Dorsolateral prefrontal cortex (tissue), 120 donors: ENCODE measurements at regions of chr17 and their contacts with region 1.

Region 1: GRCh38 chr17:1920948-1921351 is 91.1 kb downstream of the RPA1 start:
- DNase-seq: peak; percentile 44 to 97 (median 76)
- H3K4me3 ChIP-seq: no peak overlapping the region
- H3K27ac ChIP-seq: peak overlapping the region in 43 of 59 donors; percentile 17 to 89 (median 68)
- H3K27me3 ChIP-seq: peaks cover 0 to 10% (median 0%) of the 10 kb centered on the region in 45 donors
- CTCF ChIP-seq: no peak

Region 2: GRCh38 chr17:1992541-1992940 is 71.6 kb after region 1 on chr17:
- intact Hi-C with region 1: loop called in 1 of 2 experiments (anchors 5 kb)
- DNase-seq: peak in 7 of 10 donors; percentile 48 to 79 (median 69)
- H3K4me3 ChIP-seq: no peak overlapping the region
- H3K27ac ChIP-seq: peak overlapping the region in 50 of 59 donors; percentile 16 to 85 (median 64)
- H3K27me3 ChIP-seq: peaks cover 0 to 5% (median 0%) of the 10 kb centered on the region in 45 donors
- CTCF ChIP-seq: no peak